Ovary (tissue), 10 donors: ENCODE measurements at regions of chr3 and their contacts with region 1.

Region 1: GRCh38 chr3:81980596-81981494 is 219.4 kb upstream of the GBE1 start:
- DNase-seq: no peak
- H3K4me3 ChIP-seq: no peak overlapping the region
- H3K27ac ChIP-seq: no peak overlapping the region
- H3K4me1 ChIP-seq: no peaks in the 10 kb centered on the region
- H3K27me3 ChIP-seq: no peaks in the 10 kb centered on the region
- CTCF ChIP-seq: no peak
- EP300 ChIP-seq: no peak
- POLR2A ChIP-seq: no peak

Region 2: GRCh38 chr3:81927811-81928210 is 53.0 kb before region 1 on chr3:
- intact Hi-C with region 1: loop called in 1 of 4 experiments (anchors 1 kb)
- DNase-seq: no peak
- H3K4me3 ChIP-seq: no peak overlapping the region
- H3K27ac ChIP-seq: no peak overlapping the region
- H3K4me1 ChIP-seq: no peaks in the 10 kb centered on the region
- H3K27me3 ChIP-seq: no peaks in the 10 kb centered on the region
- CTCF ChIP-seq: no peak
- EP300 ChIP-seq: no peak
- POLR2A ChIP-seq: no peak